GM12878 (cell line): ENCODE measurements at regions of chr9 and their contacts with region 1.

Region 1: GRCh38 chr9:13548535-13548934 is 269.0 kb upstream of the MPDZ start:
- DNase-seq: no peak
- ATAC-seq: no peak
- H3K4me3 ChIP-seq: no peak overlapping the region
- H3K27ac ChIP-seq: no peak overlapping the region
- H3K4me1 ChIP-seq: no peaks in the 10 kb centered on the region
- H3K27me3 ChIP-seq: no peaks in the 10 kb centered on the region
- CTCF ChIP-seq: no peak
- EP300 ChIP-seq: no peak
- POLR2A ChIP-seq: no peak
- RAD21 ChIP-seq: no peak

Region 2: GRCh38 chr9:13607481-13608441 is 59.2 kb after region 1 on chr9:
- CTCF ChIA-PET with region 1: no interaction called
- POLR2A ChIA-PET with region 1: no interaction called
- RAD21 ChIA-PET with region 1: no interaction called
- SMC1A ChIA-PET with region 1: no interaction called
- in situ Hi-C with region 1: loop called (anchors 10 kb)
- intact Hi-C with region 1: no loop called
- DNase-seq: no peak
- ATAC-seq: no peak
- H3K4me3 ChIP-seq: no peak overlapping the region
- H3K27ac ChIP-seq: no peak overlapping the region
- H3K4me1 ChIP-seq: no peaks in the 10 kb centered on the region
- H3K27me3 ChIP-seq: no peaks in the 10 kb centered on the region
- CTCF ChIP-seq: no peak
- EP300 ChIP-seq: no peak
- POLR2A ChIP-seq: no peak
- RAD21 ChIP-seq: no peak